ENCODE measurements at regions of chr1 and their contacts with region 1.

Region 1: DNA sequence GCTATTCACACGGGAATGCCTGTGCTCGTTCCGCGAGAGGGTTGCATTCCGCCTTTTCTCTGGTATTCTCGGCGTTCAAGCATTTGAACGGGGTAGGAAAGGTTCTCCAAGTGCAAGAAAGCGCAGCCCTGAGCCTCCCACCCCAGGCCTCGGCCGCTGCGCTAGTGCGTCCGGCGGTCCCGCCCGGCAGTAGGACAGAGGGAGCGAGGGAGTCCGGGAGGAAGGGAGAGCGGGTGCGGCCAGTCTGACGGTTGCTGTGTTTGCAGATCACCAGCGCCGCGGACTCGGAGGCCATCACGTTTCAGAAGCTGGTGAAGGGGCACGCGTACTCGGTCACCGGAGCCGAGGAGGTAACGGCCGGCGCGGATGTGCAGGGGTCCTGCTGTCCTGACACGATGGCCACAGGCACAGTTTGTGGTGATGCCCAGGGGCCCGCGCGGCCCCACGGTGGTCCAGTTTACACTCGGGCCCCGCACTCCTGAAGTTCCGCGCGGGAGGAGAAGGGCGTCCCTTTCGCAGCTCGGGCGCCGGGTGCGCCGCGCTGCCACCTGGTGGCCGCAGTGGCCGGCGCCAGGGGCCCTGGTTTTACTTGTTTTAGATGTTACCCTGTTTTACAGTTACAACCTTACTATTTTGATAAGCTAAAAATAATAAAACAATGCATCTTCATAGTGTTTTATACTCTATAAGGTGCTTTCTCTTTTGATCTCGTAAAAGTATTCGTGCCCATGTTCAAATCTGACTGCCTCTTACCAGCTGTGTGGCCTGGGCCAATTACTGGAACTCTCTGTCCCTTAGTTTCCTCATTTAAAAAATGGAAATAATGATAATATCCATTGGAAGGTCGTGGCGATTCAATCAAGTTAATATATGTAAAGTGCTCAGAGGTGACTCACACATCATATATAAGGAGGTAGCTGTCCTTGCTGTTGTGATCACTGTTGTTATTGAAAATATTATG is 36.7 kb downstream of the CAPN2 start:
- DNase-seq: peak; percentile 74
- H3K4me3 Mint-ChIP-seq: peak overlapping the region; percentile 42
- H3K27ac Mint-ChIP-seq: no peak overlapping the region
- H3K4me1 Mint-ChIP-seq: peaks cover 23% of the 10 kb centered on the region
- H3K27me3 Mint-ChIP-seq: no peaks in the 10 kb centered on the region

Region 2: DNA sequence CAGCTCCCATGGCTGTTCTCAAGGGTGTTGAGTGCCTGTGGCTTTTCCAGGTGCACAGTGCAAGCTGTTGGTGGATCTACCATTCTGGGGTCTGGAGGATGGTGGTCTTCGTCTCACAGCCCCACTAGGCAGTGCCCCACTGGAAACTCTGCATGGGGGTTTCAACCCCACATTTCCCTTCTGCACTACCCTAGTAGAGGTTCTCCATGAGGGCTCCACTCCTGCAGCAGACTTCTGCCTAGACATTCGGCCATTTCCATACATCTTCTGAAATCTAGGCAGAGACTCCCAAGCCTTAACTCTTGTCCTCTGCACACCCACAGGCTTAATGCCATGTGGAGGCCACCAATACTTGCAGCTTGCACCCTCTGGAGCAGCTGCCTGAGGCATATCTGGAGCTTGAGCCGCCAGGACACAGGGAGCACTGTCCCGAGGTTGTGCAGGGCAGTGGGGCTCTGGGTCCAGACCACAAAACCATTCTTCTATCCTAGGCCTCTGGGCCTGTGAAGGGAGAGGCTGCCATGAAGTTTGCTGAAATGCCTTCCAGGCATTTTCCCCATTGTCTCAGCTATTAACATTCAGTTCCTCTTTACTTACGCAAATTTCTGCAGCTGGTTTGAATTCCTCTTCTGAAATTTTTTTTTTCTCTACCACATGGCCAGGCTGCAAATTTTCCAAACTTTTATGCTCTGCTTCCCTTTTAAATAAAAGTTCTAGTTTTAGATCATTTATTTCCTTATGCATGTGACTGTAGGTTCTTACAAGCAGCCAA is 74.7 kb before region 1 on chr1:
- CTCF ChIA-PET with region 1: no interaction called
- POLR2A ChIA-PET with region 1: no interaction called
- intact Hi-C with region 1: no loop called
- DNase-seq: no peak
- H3K4me3 Mint-ChIP-seq: no peak overlapping the region
- H3K27ac Mint-ChIP-seq: no peak overlapping the region
- H3K4me1 Mint-ChIP-seq: no peaks in the 10 kb centered on the region
- H3K27me3 Mint-ChIP-seq: no peaks in the 10 kb centered on the region

Region 3: DNA sequence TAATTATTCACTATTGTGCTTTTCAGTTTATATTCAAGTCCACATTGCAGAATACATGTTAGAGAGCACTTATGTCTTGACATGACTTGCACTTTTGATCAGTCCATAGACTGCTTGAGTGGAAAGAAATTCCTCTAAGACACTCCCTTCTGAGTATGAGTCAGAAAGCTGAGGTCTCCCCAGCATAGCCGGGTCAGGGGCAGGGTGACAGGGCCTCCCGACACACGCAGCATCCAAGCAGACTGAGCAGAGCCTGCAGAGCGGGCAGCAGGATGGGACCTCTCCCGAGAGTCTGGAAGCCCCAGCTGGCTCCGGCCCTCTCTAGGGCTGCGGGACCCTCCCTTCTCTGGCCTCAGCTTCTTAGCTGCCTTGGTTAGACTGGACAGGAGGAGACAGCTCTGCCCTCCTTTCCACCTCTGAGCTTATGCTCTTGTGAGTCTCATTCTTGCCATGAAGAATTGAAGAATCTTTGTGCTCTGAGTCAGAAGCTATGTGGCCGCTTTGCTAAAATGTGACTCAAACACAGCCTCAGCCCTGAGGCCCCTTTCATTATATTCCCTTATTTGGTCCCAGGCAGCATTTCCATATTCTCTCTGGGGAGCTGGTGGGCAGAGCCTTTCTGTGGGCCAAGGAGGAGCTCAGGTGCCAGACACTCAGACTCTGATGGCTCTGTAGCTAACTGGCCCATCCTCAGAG is 48.0 kb before region 1 on chr1:
- CTCF ChIA-PET with region 1: interaction called, 189 read pairs
- POLR2A ChIA-PET with region 1: interaction called, 4 read pairs
- intact Hi-C with region 1: loop called (anchors 1 kb)
- DNase-seq: peak; percentile 52
- H3K4me3 Mint-ChIP-seq: no peak overlapping the region
- H3K27ac Mint-ChIP-seq: peak overlapping the region; percentile 65
- H3K4me1 Mint-ChIP-seq: peaks cover 35% of the 10 kb centered on the region
- H3K27me3 Mint-ChIP-seq: peaks cover 4% of the 10 kb centered on the region

Region 4: GRCh38 chr1:223726380-223727001 is 22.6 kb before region 1 on chr1:
- CTCF ChIA-PET with region 1: interaction called, 46 read pairs
- POLR2A ChIA-PET with region 1: interaction called, 3 read pairs
- intact Hi-C with region 1: loop called (anchors 1 kb)
- DNase-seq: peak; percentile 96
- H3K4me3 Mint-ChIP-seq: peak overlapping the region; percentile 54
- H3K27ac Mint-ChIP-seq: peak overlapping the region; percentile 71
- H3K4me1 Mint-ChIP-seq: peaks cover 74% of the 10 kb centered on the region
- H3K27me3 Mint-ChIP-seq: no peaks in the 10 kb centered on the region

Region 5: GRCh38 chr1:223761411-223761810 is 12.4 kb after region 1 on chr1:
- CTCF ChIA-PET with region 1: interaction called, 12 read pairs
- POLR2A ChIA-PET with region 1: no interaction called
- intact Hi-C with region 1: no loop called
- DNase-seq: no peak
- H3K4me3 Mint-ChIP-seq: no peak overlapping the region
- H3K27ac Mint-ChIP-seq: no peak overlapping the region
- H3K4me1 Mint-ChIP-seq: no peaks in the 10 kb centered on the region
- H3K27me3 Mint-ChIP-seq: no peaks in the 10 kb centered on the region

Region 6: DNA sequence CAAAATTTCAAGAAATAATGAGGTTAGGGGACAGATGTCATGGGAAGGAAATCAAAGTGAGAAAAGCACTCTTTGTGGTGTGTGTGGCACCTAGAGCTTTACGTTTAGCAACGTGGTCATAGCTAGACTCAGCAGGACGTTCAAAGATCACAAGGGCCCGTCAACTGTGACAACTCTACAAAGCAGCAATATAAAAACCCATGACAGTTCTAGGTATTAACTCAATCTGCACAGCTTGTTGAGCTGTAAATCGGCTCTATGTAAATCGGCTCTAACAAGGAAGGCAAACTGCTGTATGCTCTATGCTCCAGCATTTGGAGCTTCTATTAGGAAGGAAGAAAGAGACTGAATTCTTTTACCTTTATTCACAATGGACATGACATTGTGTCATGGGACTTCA is 31.9 kb after region 1 on chr1:
- CTCF ChIA-PET with region 1: interaction called, 17 read pairs
- POLR2A ChIA-PET with region 1: no interaction called
- intact Hi-C with region 1: no loop called
- DNase-seq: no peak
- H3K4me3 Mint-ChIP-seq: no peak overlapping the region
- H3K27ac Mint-ChIP-seq: peak overlapping the region; percentile 4
- H3K4me1 Mint-ChIP-seq: peaks cover 15% of the 10 kb centered on the region
- H3K27me3 Mint-ChIP-seq: no peaks in the 10 kb centered on the region

Measured in activated CD4-positive, alpha-beta memory T cell treated with anti-CD3 and anti-CD28 coated beads for 36 hours (primary cell).